Mammary epithelial cell (primary cell): ENCODE measurements at regions of chr6 and their contacts with region 1.

Region 1: GRCh38 chr6:113994918-113995342 is 24.0 kb upstream of the HDAC2 start:
- DNase-seq: peak; percentile 86
- H3K4me3 ChIP-seq: no peak overlapping the region
- H3K27ac ChIP-seq: no peak overlapping the region
- H3K4me1 ChIP-seq: peaks cover 20% of the 10 kb centered on the region
- H3K27me3 ChIP-seq: no peaks in the 10 kb centered on the region
- CTCF ChIP-seq: peak; percentile 85 to 92

Region 2: DNA sequence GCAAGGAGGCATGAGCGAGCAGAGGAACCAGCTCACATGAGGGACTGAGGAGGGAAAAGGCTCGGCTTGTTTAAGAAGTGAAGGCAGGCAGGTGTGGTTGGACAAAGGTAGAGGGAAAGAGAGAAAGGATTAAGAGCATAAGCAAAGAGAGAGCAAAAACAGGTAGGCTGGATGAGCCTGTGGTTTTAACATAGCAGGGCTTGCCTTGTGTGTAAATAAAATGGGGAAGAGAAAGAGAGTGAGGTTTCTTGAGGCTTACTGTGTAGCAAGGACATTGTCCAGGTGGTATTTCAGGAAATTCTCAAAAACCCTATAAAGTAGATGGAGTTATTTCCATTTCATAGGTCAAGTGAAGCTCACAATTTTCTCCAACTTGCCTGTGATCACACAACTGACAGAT is 69.9 kb after region 1 on chr6:
- CTCF ChIA-PET with region 1: interaction called, 5 read pairs
- dilution Hi-C with region 1: loop called (anchors 5 kb)
- in situ Hi-C with region 1: no loop called
- intact Hi-C with region 1: loop called (anchors 1 kb)
- DNase-seq: no peak
- H3K4me3 ChIP-seq: no peak overlapping the region
- H3K27ac ChIP-seq: no peak overlapping the region
- H3K4me1 ChIP-seq: no peaks in the 10 kb centered on the region
- H3K27me3 ChIP-seq: no peaks in the 10 kb centered on the region
- CTCF ChIP-seq: no peak

Region 3: DNA sequence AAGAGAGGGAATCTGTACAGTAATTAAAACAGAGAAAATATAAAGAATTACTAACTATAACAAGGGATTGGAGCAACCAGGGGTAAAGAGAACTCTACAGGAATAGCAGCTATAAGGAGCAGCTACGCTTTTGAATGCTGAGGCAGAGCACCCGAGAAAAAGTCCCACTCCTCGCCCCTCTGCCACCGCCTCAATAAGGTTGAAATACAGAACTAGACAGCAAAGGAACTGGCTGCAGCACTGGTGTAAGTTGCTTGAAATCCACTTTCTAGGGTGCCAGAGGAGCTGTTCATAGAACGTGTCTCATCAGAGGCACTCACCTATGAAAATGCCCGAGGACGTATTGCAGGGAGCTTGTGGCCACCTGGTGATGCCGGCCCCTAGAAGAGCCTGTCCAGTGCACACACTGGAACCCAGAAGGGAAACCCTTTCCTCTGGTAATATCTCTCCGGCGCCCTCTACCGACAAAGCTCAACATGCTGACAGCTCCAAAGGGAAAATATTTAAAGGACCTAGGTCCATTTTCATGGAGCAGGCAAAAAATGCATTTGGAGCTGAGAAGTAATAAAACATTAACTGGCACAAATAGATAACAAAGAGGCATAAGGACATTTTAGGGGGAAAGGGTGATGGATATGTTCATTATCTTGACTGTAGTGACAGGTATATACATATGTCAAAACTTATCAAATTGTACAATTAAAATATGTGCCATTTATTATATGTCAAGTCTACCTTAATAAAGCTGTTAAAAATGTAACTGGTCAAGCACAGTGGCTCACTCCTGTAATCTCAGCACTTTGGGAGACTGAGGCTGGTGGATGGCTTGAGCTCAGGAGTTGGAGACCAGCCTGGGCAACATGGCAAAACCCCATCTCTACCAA is 113.4 kb after region 1 on chr6:
- CTCF ChIA-PET with region 1: interaction called, 23 read pairs
- dilution Hi-C with region 1: no loop called
- in situ Hi-C with region 1: no loop called
- intact Hi-C with region 1: loop called (anchors 1 kb)
- DNase-seq: peak; percentile 65
- H3K4me3 ChIP-seq: no peak overlapping the region
- H3K27ac ChIP-seq: no peak overlapping the region
- H3K4me1 ChIP-seq: no peaks in the 10 kb centered on the region
- H3K27me3 ChIP-seq: peaks cover 7% of the 10 kb centered on the region
- CTCF ChIP-seq: peak; percentile 75 to 80

Region 4: GRCh38 chr6:114249522-114249921 is 254.6 kb after region 1 on chr6:
- CTCF ChIA-PET with region 1: no interaction called
- dilution Hi-C with region 1: no loop called
- in situ Hi-C with region 1: no loop called
- intact Hi-C with region 1: loop called (anchors 10 kb)
- DNase-seq: no peak
- H3K4me3 ChIP-seq: no peak overlapping the region
- H3K27ac ChIP-seq: no peak overlapping the region
- H3K4me1 ChIP-seq: peaks cover 14% of the 10 kb centered on the region
- H3K27me3 ChIP-seq: peaks cover 2% of the 10 kb centered on the region
- CTCF ChIP-seq: no peak

Region 5: DNA sequence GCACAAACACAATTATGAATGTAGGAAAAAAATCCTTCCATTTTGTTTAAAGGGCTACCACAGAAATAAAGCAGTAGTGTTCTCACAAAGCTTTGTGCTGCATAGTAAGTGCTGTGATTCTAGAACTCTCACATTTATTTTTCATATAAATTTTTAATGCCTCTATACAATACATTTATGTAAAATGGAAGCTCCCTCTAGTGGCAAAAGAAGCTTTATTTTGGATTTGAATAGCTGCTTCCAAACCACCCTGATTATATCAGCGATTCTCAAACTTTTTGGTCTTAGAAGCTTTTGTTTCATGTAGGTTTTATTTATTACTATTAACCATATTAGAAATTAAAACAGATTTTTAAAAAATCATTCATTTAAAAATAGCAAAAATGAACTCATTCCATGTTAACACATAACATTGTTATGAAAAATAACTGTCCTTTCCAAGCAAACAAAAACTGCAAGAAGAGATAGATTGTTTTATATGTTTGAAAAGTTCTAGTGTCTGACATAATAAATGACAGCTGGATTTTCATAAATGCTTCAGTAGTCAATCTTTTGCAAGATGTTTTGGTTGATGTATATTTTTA is 309.5 kb after region 1 on chr6:
- CTCF ChIA-PET with region 1: no interaction called
- dilution Hi-C with region 1: no loop called
- in situ Hi-C with region 1: no loop called
- intact Hi-C with region 1: loop called (anchors 2 kb)
- DNase-seq: peak; percentile 1
- H3K4me3 ChIP-seq: no peak overlapping the region
- H3K27ac ChIP-seq: no peak overlapping the region
- H3K4me1 ChIP-seq: no peaks in the 10 kb centered on the region
- H3K27me3 ChIP-seq: no peaks in the 10 kb centered on the region
- CTCF ChIP-seq: peak; percentile 41 to 53

Region 6: GRCh38 chr6:115896538-115897129 is 1901.7 kb after region 1 on chr6:
- CTCF ChIA-PET with region 1: no interaction called
- dilution Hi-C with region 1: no loop called
- in situ Hi-C with region 1: no loop called
- intact Hi-C with region 1: loop called (anchors 10 kb)
- DNase-seq: peak; percentile 19
- H3K4me3 ChIP-seq: no peak overlapping the region
- H3K27ac ChIP-seq: no peak overlapping the region
- H3K4me1 ChIP-seq: no peaks in the 10 kb centered on the region
- H3K27me3 ChIP-seq: no peaks in the 10 kb centered on the region
- CTCF ChIP-seq: peak; percentile 84 to 85